ENCODE measurements at regions of chr5 and their contacts with region 1.

Region 1: DNA sequence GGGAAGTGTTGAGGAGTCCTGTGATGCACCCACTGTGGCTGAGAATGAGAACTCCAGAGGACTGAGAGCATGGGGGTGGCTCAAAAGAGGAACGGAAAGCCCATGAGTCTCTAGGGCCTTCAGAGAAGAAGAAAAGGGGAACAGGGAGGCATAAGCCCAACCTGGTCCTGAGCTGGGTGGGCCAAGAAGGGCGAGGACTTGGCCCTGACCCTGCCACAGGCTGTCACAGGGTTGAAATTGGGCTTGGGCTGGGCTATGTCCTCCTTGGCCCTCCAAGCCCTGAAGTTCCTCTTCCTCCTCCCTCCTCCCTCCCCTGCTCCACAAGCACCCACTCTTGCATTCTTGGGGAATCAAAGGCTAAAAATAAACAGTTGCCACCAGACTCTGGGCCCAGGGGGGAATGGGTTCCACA is 49.3 kb upstream of the PPARGC1B start:
- DNase-seq: peak; percentile 84

Region 2: DNA sequence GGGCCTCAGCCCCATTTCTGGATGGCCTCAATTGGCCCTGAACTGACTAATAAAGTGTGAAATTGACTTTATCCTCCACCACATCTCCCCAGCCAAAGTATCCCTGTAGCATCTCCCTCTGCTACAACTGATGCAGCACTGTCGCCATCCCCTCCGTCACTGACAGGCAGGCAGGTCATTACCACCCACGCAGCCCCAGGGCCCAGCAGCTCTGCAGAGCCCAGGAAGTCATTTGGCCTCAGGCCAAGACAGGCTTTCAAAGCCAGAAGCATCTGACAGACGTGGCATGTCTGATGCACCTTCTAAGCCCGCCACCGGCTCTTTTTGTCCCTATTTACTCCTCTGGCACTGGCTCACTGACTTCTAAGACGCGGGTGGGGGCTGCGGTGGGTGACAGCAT is 34.3 kb before region 1 on chr5:
- intact Hi-C with region 1: no loop called
- DNase-seq: no peak

Region 3: GRCh38 chr5:149857499-149857898 is 176.7 kb after region 1 on chr5:
- intact Hi-C with region 1: loop called in 1 of 2 experiments (anchors 1 kb)
- DNase-seq: peak; percentile 93